ENCODE measurements at regions of chr7 and their contacts with region 1.

Region 1: GRCh38 chr7:140639366-140640053 is 1.1 kb downstream of the DENND2A start:
- DNase-seq: peak; percentile 50 to 69 (median 61)
- H3K4me3 ChIP-seq: peak overlapping the region; percentile 62
- H3K27ac ChIP-seq: peak overlapping the region; percentile 79 to 90
- H3K4me1 ChIP-seq: peaks cover 21% of the 10 kb centered on the region
- H3K27me3 ChIP-seq: no peaks in the 10 kb centered on the region
- CTCF ChIP-seq: no peak
- EP300 ChIP-seq: no peak
- POLR2A ChIP-seq: no peak

Region 2: GRCh38 chr7:139783647-139784385 is 855.7 kb before region 1 on chr7:
- intact Hi-C with region 1: no loop called
- DNase-seq: no peak
- H3K4me3 ChIP-seq: no peak overlapping the region
- H3K27ac ChIP-seq: no peak overlapping the region
- H3K4me1 ChIP-seq: peaks cover 2% of the 10 kb centered on the region
- H3K27me3 ChIP-seq: no peaks in the 10 kb centered on the region
- CTCF ChIP-seq: no peak
- EP300 ChIP-seq: no peak
- POLR2A ChIP-seq: no peak

Region 3: DNA sequence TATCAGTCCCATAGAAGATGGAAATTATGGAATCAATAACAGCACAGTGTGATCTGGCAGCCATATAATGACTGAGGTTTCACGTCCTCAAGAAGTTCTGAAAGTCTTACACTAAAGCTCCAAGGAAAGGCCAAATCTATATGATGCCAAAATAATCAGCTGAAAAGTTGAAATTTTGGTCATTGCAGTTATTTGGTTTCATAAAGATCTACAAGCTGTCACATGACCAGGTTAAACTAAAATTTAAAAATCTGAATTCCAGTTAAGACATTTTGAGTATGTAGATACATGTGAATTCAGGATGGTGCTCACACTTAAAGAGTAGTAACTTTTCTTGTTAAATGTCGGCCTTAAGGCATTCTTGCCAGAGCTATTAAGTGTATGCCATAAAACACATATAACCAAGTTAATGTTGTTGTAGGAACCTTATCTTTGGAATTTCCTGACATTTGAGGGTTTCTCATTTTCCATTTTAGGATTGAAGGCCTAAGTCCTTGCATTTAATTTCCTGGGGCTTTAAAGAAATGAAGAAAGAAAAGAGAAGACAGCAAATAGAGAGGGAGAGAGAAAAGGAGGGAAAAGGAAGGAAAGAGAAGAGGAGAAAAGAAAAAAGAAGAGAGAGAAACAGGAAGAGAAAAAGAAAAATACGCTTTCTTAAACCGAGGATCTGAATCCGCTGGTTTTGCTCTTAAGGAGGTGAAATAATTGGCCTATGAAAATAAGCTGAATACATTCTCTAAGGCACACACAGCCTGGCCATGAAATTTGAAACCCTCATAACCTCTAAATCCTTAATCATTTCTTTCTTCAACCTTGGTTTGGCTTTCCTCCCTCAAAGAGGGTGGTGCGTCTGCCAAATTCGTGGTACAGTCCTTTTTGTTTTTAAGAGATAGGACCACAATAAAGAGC is 42.7 kb before region 1 on chr7:
- intact Hi-C with region 1: loop called in 1 of 4 experiments (anchors 5 kb)
- DNase-seq: peak; percentile 37 to 52 (median 38)
- H3K4me3 ChIP-seq: no peak overlapping the region
- H3K27ac ChIP-seq: peak overlapping the region in 1 of 2 donors; percentile 63
- H3K4me1 ChIP-seq: peaks cover 14% of the 10 kb centered on the region
- H3K27me3 ChIP-seq: no peaks in the 10 kb centered on the region
- CTCF ChIP-seq: no peak
- EP300 ChIP-seq: no peak
- POLR2A ChIP-seq: no peak

Region 4: DNA sequence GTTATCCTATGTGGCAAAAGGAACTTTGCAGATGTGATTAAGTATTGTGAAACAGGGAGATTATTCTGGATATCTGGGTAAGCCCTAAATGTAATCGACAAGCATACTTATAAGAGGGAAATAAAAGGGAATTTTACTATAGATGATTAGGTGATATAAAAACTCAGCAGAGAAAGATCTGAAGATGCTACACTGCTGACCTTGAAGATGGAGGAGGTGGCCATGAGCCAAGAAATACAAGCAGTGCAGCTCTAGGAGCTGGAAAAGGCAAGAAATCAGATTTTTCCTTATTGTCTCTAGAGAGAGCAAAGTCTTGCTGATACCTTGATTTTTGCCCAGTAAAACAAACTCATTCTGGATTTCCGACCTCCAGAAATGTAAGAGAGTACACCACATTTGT is 217.5 kb after region 1 on chr7:
- intact Hi-C with region 1: no loop called
- DNase-seq: no peak
- H3K4me3 ChIP-seq: no peak overlapping the region
- H3K27ac ChIP-seq: no peak overlapping the region
- H3K4me1 ChIP-seq: no peaks in the 10 kb centered on the region
- H3K27me3 ChIP-seq: no peaks in the 10 kb centered on the region
- CTCF ChIP-seq: no peak
- EP300 ChIP-seq: no peak
- POLR2A ChIP-seq: no peak

Measured in ovary (tissue), 10 donors.